ENCODE measurements at regions of chr10 and their contacts with region 1.

Region 1: DNA sequence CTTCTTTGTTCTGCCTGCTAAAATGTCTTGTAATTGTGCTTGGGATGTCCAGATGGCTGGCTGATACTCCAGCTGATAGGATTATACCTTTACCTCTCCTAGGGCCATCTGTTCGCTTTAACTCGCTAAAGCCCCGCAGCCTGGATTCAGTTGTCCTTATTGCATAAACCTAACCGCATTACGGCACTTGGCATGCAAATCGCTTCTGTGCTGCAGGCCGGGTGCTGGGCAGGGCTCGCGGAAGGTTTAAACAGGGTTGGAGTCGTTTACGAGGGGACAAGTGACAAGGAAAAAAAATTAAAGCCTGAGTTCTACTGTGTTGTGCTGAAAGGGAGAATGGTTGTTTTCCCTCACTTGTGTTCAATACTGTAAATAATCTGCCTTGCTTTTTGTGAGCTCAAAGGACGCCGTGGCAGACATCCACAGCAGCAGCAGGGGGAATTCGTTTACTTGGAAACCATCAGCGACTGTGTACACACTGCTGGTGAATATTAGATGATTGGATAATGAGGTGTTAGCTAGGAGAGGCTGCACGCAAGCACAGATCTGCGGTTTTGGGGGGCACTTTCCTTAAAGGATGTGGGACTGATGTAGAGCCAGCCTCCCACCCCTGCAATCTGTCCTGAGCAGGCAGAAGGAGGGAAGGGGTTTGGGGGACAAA is 93.0 kb downstream of the EBF3 start:
- DNase-seq: peak; percentile 85 to 99 (median 99)
- H3K4me3 ChIP-seq: peak overlapping the region in 4 of 7 experiments; percentile 7 to 38 (median 30)
- H3K27ac ChIP-seq: peak overlapping the region; percentile 86 to 91
- H3K4me1 ChIP-seq: peaks cover 3 to 35% (median 9%) of the 10 kb centered on the region in 4 experiments
- H3K27me3 ChIP-seq: no peaks in the 10 kb centered on the region

Region 2: GRCh38 chr10:129725011-129725410 is 146.1 kb before region 1 on chr10:
- CTCF ChIA-PET with region 1: no interaction called
- POLR2A ChIA-PET with region 1: no interaction called
- DNase-seq: no peak
- H3K4me3 ChIP-seq: no peak overlapping the region
- H3K27ac ChIP-seq: no peak overlapping the region
- H3K4me1 ChIP-seq: peaks cover 0 to 2% (median 0%) of the 10 kb centered on the region in 4 experiments
- H3K27me3 ChIP-seq: no peaks in the 10 kb centered on the region

Region 3: GRCh38 chr10:129883626-129884396 is 12.7 kb after region 1 on chr10:
- CTCF ChIA-PET with region 1: interaction called, 10 read pairs
- POLR2A ChIA-PET with region 1: no interaction called
- DNase-seq: peak; percentile 67 to 94 (median 94)
- H3K4me3 ChIP-seq: no peak overlapping the region
- H3K27ac ChIP-seq: no peak overlapping the region
- H3K4me1 ChIP-seq: peaks cover 6 to 32% (median 16%) of the 10 kb centered on the region in 4 experiments
- H3K27me3 ChIP-seq: peaks cover 0 to 5% (median 0%) of the 10 kb centered on the region in 5 experiments

Measured in common myeloid progenitor, CD34-positive (primary cell).